ENCODE measurements at regions of chr5 and their contacts with region 1.

Region 1: DNA sequence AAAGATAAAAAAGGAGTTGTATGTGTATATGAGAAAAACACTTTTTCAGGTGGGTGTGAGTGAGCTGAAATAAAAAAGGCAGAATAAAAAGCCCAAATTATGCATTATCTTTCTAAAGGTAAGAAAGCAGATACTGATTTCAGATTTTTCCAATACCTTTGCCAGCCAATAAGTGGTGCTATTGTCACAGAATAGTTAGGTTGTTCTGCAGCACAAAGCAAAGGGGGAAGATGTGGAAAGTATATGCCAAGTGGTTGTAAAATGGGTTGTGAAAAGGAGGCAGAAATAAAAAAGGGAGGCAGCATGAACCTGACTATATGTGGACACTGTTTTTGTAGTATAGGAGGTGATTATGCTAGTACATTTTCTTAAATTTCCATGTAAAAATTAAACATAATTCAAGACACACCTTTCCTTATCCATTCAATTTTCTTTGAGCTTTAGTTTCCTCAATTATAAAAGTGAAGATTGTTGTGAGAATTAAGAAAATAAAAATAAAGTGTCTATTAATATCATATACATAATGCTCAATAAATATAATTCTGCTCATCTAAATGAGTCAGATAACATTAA is 106.7 kb downstream of the SMIM15 start:
- DNase-seq: no peak
- ATAC-seq: peak; percentile 41

Region 2: DNA sequence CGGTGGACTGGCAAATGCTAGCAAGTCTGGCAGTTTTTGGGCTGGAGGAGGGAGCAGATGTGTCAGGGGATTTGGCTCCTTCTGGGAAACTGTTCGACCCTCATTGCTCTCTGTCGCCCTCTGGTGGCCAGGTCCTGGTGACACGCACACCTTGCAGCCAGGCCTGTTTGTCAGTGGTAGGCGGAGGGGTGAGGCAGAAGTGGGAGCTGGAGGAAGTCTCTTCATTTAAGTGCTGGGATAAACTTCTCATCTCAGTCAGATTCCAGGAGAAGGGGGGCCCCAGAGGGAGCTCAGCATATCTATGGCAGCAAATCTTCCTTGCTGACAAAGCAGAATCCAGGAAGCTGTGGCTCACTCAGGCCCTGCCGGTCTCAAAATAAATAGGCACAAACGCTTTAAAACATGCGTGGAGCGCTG is 603.1 kb after region 1 on chr5:
- intact Hi-C with region 1: loop called (anchors 10 kb)
- DNase-seq: peak; percentile 90
- ATAC-seq: peak; percentile 94

Region 3: DNA sequence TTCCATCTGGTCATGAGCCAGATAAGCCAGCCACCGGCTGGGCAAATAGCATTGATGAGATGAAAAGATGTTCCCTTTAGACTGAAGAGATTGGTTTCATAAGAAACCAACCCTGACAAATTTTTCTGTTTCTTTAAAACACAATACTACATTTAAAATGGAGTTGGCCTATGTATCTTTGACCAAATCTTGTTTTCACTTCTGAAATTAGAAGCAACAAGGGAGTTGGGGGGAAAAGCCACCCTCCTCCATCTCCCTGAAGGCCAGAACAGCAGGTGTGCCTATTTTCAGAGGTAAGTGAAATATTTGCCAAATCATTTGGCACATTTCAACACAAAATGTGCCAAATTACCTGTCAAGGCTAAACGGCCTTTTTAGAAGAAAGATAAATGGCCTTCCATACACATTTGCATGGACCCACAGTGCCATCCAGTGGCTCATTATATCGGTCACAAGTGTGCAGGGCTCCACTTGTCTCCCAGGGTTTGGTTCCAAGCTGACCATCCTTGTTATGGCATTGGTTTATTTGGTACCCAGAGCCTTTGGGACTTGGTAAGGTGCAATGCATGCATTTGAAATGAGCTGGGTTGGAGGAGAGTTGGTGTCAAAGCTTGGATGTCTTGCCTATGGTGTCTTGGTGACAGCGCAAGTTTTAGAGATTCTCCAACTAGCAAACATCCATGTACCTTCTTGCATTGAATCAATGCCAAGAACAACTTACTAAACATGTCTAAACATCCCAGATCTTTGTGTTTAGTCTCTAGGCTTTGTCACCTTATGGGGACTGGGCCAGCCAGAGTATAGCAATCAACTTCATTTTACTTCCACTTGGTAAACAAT is 878.5 kb after region 1 on chr5:
- intact Hi-C with region 1: loop called (anchors 10 kb)
- DNase-seq: no peak
- ATAC-seq: peak; percentile 84

Measured in Right ventricle myocardium superior (tissue), 1 donor.